ENCODE measurements at regions of chr16 and their contacts with region 1.

Region 1: DNA sequence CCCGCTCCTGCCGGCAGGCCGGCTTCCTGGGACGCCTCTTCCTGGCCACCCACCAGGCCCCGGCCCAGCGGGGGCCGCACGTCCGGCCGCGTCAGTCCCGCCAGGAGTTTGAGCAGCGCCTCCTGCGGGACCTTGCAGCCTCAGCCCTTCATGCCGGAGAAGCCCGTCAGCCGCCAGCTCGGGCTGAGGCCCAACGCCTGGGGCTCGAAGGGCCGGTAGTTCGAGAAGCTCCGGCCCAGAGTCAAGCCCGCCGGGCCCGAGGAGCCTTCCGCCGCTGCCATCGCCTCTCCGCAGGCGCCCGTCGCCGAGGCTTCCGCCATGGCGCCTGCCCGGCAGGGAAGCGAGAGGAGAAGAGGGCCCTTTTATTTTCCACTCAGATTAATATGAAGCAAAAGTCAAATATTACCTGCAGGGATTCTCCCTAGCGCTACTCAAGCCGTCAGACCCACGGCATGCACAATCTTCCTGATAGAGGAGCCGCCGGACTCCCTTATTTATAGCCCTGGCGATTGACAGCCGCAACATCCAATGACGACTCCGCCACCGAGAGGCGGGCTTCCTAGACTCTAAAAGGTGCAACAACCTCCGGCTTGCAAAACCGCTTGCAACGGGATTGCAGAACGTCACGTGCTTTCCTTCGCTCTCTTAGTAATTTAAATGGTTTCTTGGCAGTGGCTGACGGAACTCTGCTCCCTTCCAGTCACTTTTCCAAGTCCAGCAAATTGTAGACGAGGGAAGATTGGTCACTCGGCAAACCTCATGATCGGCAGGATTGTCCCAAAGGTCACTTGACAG is at the start of gene SEPHS2:
- DNase-seq: peak; percentile 95
- H3K4me3 ChIP-seq: peak within 1 kb of the TSS; percentile 75 to 95
- H3K27ac ChIP-seq: peak within 1 kb of the TSS; percentile 86 to 88
- H3K4me1 ChIP-seq: peaks cover 8 to 15% of the 10 kb centered on the region in 2 experiments; a peak in 2 of 4 replicates
- H3K27me3 ChIP-seq: no peaks in the 10 kb centered on the region
- CTCF ChIP-seq: peak; percentile 56
- EP300 ChIP-seq: peak in 1 of 2 experiments; percentile 8; a peak in 1 of 4 replicates
- RAD21 ChIP-seq: no peak; the same call in 1 of the 2 replicates
- polyA plus RNA-seq, gene SEPHS2: 30.8 and 36.3 TPM in 2 replicates

Region 2: DNA sequence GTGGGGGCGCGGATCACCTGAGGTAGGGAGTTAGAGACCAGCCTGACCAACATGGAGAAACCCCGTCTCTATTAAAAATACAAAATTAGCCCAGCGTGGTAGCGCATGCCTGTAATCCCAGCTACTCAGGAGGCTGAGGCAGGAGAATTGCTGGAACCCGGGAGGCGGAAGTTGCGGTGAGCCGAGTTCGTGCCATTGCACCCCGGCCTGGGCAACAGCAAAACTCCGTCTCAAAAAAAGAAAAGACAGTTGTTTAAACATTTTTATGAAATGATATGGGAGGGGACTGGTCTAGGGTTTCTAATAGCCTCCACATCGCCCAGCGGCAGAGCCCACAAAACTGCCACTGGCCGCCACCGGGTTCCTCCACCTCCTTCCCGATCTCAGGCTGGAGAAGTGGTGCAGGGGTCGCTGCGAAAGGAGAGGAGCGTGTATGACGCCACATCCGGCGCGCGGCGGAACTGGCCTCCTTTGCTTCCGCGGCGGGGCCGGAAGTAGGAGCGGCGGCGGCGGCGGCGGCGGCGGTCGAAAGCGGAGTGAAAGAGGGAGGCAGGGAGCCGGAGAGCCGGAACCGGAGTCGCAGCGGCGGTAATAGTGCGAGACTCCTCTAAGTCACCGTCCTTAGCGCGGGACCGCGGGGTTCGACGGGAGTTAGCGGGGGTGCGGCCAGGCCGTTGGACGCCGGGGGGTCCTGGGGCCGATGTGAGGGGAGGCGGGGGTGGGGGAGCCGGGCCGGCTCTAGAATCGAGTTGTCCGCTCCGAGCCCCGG is 369.9 kb before region 1 on chr16 and contains the start of gene PPP4C:
- CTCF ChIA-PET with region 1: no interaction called
- POLR2A ChIA-PET with region 1: no interaction called
- DNase-seq: peak; percentile 97
- H3K4me3 ChIP-seq: peak within 1 kb of the TSS; percentile 76 to 78
- H3K27ac ChIP-seq: peak within 1 kb of the TSS; percentile 47 to 90
- H3K4me1 ChIP-seq: peaks cover 5 to 18% of the 10 kb centered on the region in 2 experiments; a peak in 3 of 4 replicates
- H3K27me3 ChIP-seq: no peaks in the 10 kb centered on the region
- CTCF ChIP-seq: no peak; the same call in 1 of the 2 replicates
- EP300 ChIP-seq: peak in 1 of 2 experiments; percentile 53; a peak in 1 of 4 replicates
- RAD21 ChIP-seq: no peak
- polyA plus RNA-seq, gene PPP4C: 325 and 339 TPM in 2 replicates

Region 3: DNA sequence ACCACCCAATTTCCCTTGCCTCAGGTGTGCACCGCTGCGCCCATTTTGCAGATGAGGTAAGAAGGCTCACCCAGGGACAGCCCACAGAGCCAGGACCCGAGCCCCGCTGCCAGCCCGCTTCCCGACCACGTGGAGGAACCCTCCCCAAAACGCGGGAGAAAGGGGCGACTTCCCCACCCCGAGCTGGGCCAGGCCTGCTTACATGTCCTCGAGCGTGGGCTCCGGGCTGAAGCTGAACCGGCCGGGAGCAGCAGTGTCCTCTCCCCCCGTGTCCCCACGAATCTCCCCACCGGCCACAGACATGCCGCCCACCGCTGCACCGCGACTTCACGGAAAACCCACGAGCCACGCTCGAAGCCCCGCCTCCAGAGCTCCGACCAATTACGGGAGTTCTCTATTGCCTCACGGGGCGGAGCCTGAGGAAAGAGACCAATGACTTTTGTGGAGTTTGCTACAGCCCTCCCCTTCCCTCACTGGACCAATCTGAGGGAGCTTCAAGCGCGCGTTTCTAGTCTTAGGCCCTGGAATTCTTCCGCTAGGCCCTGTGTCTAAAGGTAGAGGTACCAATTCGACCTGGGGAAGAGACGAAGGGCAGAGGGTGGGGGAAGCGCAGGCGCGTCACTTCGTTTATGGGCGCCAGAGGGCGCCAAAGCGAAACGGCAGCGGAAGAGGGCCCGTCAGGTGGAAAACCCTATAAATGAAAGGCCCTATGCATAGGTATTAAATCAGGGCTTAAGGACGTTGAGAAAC is 15.8 kb before region 1 on chr16 and contains the start of gene DCTPP1:
- CTCF ChIA-PET with region 1: interaction called, 27 read pairs
- POLR2A ChIA-PET with region 1: interaction called, 7 read pairs
- DNase-seq: peak; percentile 94
- H3K4me3 ChIP-seq: peak within 1 kb of the TSS; percentile 69 to 82
- H3K27ac ChIP-seq: peak within 1 kb of the TSS; percentile 41 to 56; a peak in 3 of 4 replicates
- H3K4me1 ChIP-seq: peaks cover 6 to 10% of the 10 kb centered on the region in 2 experiments; a peak in 1 of 4 replicates
- H3K27me3 ChIP-seq: no peaks in the 10 kb centered on the region
- CTCF ChIP-seq: peak; percentile 85
- EP300 ChIP-seq: no peak
- RAD21 ChIP-seq: peak; percentile 74
- polyA plus RNA-seq, gene DCTPP1: 78.9 and 79.2 TPM in 2 replicates

Region 4: DNA sequence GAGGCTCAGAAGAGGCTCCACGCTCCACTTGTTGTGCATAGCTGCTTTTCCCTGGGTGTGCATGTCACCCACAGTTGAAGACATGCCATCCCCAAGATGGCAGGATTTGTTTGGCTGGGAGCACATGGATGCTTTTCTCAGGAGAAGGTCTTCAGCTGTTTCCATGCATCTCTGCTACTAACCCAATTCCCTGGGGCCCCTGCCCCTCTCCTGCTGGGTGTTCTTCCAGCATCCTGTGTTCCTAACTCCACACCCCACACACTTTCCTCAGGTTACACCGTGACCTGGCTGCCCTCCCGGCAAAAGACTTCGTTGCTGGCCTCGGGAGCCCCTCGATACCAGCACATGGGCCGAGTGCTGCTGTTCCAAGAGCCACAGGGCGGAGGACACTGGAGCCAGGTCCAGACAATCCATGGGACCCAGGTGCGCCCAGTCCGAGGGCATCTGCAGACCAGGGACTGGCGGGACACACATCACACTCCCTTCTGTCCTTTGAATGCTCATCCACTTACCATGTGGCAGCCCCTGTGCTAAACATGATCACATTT is 48.4 kb after region 1 on chr16:
- CTCF ChIA-PET with region 1: interaction called, 11 read pairs
- POLR2A ChIA-PET with region 1: no interaction called
- DNase-seq: no peak
- H3K4me3 ChIP-seq: no peak overlapping the region
- H3K27ac ChIP-seq: no peak overlapping the region
- H3K4me1 ChIP-seq: no peaks in the 10 kb centered on the region
- H3K27me3 ChIP-seq: no peaks in the 10 kb centered on the region
- CTCF ChIP-seq: no peak
- EP300 ChIP-seq: no peak
- RAD21 ChIP-seq: no peak

Region 5: GRCh38 chr16:30526823-30527635 is 81.4 kb after region 1 on chr16:
- CTCF ChIA-PET with region 1: interaction called, 15 read pairs
- POLR2A ChIA-PET with region 1: interaction called, 3 read pairs
- DNase-seq: peak; percentile 97
- H3K4me3 ChIP-seq: peak overlapping the region; percentile 80
- H3K27ac ChIP-seq: peak overlapping the region; percentile 94 to 98
- H3K4me1 ChIP-seq: peaks cover 6 to 11% of the 10 kb centered on the region in 2 experiments; a peak in 3 of 4 replicates
- H3K27me3 ChIP-seq: no peaks in the 10 kb centered on the region
- CTCF ChIP-seq: peak; percentile 39
- EP300 ChIP-seq: peak in 1 of 2 experiments; percentile 22; a peak in 1 of 4 replicates
- RAD21 ChIP-seq: peak; percentile 14; the same call in 1 of the 2 replicates

Region 6: GRCh38 chr16:30534368-30535105 is 88.9 kb after region 1 on chr16 and contains the start of gene ZNF747:
- CTCF ChIA-PET with region 1: interaction called, 19 read pairs
- POLR2A ChIA-PET with region 1: interaction called, 3 read pairs
- DNase-seq: peak; percentile 95
- H3K4me3 ChIP-seq: peak within 1 kb of the TSS; percentile 65 to 68
- H3K27ac ChIP-seq: peak within 1 kb of the TSS; percentile 81 to 91
- H3K4me1 ChIP-seq: peaks cover 8 to 17% of the 10 kb centered on the region in 2 experiments; a peak in 3 of 4 replicates
- H3K27me3 ChIP-seq: no peaks in the 10 kb centered on the region
- CTCF ChIP-seq: 0 out of 2 replicates have a peak, but pooled peaks have one; percentile 7
- EP300 ChIP-seq: peak in 1 of 2 experiments; percentile 26; a peak in 1 of 4 replicates
- RAD21 ChIP-seq: no peak
- polyA plus RNA-seq, gene ZNF747: 5.6 and 5.8 TPM in 2 replicates

Region 7: GRCh38 chr16:30628627-30629540 is 183.3 kb after region 1 on chr16:
- CTCF ChIA-PET with region 1: interaction called, 14 read pairs
- POLR2A ChIA-PET with region 1: no interaction called
- DNase-seq: peak; percentile 74
- H3K4me3 ChIP-seq: peak overlapping the region in 1 of 2 experiments; percentile 4; a peak in 1 of 4 replicates
- H3K27ac ChIP-seq: no peak overlapping the region
- H3K4me1 ChIP-seq: no peaks in the 10 kb centered on the region
- H3K27me3 ChIP-seq: no peaks in the 10 kb centered on the region
- CTCF ChIP-seq: peak; percentile 91
- EP300 ChIP-seq: no peak
- RAD21 ChIP-seq: peak; percentile 87